ENCODE measurements at regions of chr14 and their contacts with region 1.

Region 1: DNA sequence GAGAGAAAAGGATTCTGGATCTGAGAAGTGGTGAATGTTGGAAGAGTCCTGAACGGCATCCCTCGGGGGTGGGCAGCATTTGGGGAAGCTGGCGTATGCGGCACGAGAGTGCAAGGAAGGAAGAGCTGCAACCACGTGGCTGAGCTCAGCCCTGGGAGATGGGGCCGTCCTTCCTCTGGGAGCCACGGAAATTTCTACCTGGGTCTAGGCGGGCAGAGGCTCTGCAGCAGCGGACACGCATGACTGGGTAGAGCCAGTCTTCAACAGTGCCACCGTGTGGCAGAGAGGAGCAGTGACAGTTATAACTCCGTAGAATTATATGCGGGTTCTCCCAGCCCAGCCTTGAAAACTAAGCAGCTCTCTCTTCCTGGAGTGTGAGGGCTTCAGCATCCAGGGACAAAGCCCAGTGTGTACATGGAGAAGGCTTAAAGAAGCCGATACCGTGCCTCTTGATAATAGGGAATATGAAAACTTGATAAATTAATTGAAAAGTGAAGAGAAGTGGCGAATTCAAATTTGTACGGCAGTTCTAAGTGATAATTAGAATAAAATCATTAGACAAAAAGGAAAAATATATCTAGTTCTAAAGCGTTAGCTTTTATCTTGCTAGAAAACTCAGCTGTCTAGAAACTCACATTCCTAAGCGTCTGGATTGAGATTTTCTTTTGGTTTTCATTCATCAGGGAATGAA is 82.9 kb upstream of the STXBP6 start:
- DNase-seq: peak; percentile 72
- ATAC-seq: peak; percentile 98

Region 2: DNA sequence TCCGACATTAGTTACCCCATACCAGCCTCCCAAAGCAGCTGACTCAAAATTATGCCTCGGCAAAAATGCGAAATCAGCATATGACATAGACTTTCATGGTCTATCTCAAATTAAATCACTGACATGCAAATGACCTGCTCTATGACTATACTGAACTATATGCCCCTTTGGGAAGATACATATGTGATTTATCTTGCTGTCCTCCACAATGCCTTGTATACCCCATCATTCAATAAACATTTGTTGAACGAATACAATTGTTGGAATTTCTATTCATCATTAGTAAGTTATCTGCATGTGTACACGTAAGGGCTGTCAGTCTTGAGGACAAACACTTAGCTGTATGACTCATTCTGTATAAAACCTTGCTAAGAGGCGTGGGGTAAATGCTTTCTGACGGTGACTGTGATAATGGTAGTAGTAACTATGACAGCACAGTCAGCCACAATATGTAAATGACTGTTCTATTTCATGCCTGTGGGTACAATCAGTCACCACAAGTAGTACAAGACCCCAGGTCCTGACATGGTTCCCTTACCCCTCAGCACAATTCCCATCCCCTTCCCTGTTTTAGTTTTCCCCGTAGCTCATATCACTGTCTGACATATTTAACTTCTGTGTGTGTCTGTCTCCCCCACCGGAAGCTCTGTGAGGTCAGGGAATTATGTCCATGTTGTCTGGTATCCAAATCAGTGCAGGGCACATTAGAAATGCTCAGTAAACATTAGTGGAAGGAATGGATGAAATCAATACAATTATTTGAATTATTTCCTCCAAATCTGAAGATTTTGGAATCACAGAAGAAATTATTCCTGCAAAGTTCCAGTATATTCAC is 125.7 kb before region 1 on chr14:
- intact Hi-C with region 1: no loop called
- DNase-seq: no peak
- ATAC-seq: peak; percentile 46 to 94

Region 3: DNA sequence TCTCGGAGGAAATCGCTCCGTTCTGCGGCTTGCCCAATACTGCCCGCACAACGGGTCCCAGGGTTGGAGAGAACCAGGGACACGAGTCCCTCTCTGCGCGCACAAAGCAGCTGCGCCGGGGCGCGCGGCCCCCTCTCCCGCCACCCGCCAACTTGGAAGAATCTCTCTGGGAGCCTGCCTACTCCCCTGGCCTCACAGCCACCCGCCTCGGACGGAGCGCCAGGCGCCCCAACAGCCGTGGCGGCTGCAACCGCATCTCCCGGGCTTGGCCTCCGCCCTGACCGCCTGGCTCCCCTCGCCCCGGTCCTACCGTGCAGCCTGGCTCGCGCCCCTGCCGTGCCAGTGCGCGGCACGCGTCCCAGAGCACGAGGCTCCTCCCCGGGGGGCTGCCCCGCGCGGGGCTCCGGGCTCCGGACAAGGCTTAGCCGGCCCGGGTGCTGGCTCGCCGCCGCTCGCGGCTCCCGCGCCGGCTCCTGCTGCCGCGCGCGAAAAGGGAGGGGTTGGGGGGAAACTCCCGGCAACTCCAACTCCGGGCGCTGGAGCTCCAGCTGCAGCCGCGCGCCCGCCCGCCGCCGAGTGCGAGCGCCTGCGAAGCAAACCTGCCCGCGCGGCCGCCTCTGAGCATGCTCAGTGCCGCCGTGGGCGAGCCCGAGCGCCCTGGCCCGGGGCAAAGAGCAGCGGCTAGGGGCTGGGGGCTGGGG is 83.2 kb before region 1 on chr14 and contains the start of gene STXBP6:
- intact Hi-C with region 1: loop called (anchors 5 kb)
- DNase-seq: peak; percentile 80
- ATAC-seq: peak; percentile 91 to 92
- total RNA-seq, gene STXBP6: 11.0 to 23.9 TPM

Region 4: DNA sequence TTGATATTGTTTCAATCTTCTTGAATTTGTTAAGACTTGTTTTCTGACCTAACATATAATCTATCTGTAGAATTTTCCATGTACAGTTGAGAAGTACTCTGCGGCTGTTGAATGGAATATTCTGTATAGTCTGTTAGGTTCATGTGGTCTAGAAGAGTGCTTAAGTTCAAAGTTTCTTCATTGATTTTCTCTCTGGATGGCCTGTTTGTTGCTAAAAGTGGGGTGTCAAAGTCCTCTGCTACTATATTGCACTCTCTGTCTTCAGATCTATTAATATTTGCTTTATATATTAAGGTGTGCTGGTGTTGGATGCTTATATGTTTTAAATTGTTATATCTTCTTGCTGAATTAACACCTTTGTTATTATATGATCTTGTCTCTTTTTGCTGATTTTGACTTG is 208.0 kb after region 1 on chr14:
- intact Hi-C with region 1: no loop called
- DNase-seq: no peak
- ATAC-seq: no peak